Activated T-helper 1 cell treated with anti-CD3 and anti-CD28 coated beads, Interleukin-12 subunit alpha, Interleukin-12 subunit beta, Interleukin-2, Interleukin-4 antibody, amounts not matched to agents 30 ng/mL and 10 ng/mL and 1 ng/mL, durations not matched to agents 14 hours and 24 hours and 36 hours (primary cell): ENCODE measurements at regions of chr1 and their contacts with region 1.

Region 1: GRCh38 chr1:194295685-194296084 is 1109.3 kb upstream of the B3GALT2 start:
- DNase-seq: peak; percentile 12
- H3K4me3 Mint-ChIP-seq: no peak overlapping the region
- H3K27ac Mint-ChIP-seq: no peak overlapping the region
- H3K4me1 Mint-ChIP-seq: peaks cover 18% of the 10 kb centered on the region
- H3K27me3 Mint-ChIP-seq: no peaks in the 10 kb centered on the region

Region 2: DNA sequence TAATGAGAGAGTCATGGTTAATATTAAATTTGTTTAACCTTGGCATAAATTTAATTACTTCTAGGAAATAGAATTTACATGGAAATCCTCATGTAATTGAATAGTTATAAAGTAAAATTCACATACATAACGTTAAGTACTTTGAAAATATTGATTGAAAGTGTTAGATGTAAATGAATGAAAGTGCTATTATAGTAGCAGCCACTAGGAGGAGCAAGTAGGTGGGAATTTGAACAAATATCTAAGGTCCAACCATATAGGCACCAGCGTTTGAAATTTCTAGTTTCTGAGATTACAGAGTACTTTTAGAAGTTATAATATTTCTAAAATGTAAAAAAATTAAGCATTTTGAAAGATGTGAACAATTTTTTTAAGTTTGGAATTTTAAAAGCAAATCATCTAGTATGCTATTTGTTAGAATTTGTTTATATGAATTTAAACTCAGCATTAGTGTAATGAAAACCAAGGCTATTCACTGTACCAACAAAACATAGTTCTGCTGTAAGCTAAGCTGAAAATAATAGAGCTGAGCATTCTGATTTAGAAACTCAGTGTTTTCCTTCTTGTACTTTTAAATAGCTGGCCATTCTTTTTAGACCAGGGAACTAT is 1112.6 kb before region 1 on chr1:
- intact Hi-C with region 1: loop called (anchors 1 kb)
- DNase-seq: no peak
- H3K4me3 Mint-ChIP-seq: no peak overlapping the region
- H3K27ac Mint-ChIP-seq: no peak overlapping the region
- H3K4me1 Mint-ChIP-seq: peaks cover 35% of the 10 kb centered on the region
- H3K27me3 Mint-ChIP-seq: no peaks in the 10 kb centered on the region

Region 3: GRCh38 chr1:193256019-193256418 is 1039.7 kb before region 1 on chr1:
- intact Hi-C with region 1: loop called (anchors 10 kb)
- DNase-seq: no peak
- H3K4me3 Mint-ChIP-seq: no peak overlapping the region
- H3K27ac Mint-ChIP-seq: no peak overlapping the region
- H3K4me1 Mint-ChIP-seq: peaks cover 5% of the 10 kb centered on the region
- H3K27me3 Mint-ChIP-seq: no peaks in the 10 kb centered on the region

Region 4: GRCh38 chr1:193471981-193472380 is 823.7 kb before region 1 on chr1:
- intact Hi-C with region 1: no loop called
- DNase-seq: no peak
- H3K4me3 Mint-ChIP-seq: no peak overlapping the region
- H3K27ac Mint-ChIP-seq: no peak overlapping the region
- H3K4me1 Mint-ChIP-seq: peaks cover 42% of the 10 kb centered on the region
- H3K27me3 Mint-ChIP-seq: no peaks in the 10 kb centered on the region

Region 5: DNA sequence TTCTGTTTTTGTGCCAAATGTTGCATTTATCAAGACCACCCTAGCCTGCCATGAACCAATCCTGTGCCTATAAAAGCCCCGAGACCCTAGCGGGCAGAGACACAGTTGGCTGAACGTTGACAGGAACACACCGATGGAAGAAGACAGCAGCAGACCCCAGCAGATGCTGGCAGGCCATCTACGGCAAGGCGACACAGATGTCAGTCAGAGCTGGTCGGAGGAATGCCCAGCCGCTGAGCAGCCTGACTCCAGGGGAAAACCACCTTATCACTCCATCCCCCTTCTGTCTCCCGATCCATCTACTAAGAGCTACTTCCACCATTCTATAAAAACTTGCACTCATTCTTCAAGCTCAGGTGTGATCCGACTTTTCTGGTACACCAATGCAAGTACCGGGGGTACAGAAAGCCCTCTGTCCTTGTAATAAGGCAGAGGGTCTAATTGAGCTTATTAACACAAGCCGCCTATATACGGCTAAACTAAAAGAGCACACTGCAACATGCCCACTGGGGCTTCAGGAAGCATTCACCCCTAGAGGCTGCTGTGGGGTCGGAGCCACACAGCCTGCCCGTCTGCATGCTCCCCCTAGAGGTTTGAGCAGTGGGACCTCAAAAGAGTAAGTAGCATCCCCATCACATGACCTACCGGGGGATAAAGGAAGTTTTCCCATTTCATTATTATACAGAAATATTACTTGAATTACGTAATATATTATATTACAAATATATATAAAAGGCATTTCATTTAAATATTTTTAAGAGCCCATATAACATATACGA is 47.0 kb after region 1 on chr1:
- intact Hi-C with region 1: no loop called
- DNase-seq: no peak
- H3K4me3 Mint-ChIP-seq: no peak overlapping the region
- H3K27ac Mint-ChIP-seq: no peak overlapping the region
- H3K4me1 Mint-ChIP-seq: peaks cover 8% of the 10 kb centered on the region
- H3K27me3 Mint-ChIP-seq: no peaks in the 10 kb centered on the region

Region 6: DNA sequence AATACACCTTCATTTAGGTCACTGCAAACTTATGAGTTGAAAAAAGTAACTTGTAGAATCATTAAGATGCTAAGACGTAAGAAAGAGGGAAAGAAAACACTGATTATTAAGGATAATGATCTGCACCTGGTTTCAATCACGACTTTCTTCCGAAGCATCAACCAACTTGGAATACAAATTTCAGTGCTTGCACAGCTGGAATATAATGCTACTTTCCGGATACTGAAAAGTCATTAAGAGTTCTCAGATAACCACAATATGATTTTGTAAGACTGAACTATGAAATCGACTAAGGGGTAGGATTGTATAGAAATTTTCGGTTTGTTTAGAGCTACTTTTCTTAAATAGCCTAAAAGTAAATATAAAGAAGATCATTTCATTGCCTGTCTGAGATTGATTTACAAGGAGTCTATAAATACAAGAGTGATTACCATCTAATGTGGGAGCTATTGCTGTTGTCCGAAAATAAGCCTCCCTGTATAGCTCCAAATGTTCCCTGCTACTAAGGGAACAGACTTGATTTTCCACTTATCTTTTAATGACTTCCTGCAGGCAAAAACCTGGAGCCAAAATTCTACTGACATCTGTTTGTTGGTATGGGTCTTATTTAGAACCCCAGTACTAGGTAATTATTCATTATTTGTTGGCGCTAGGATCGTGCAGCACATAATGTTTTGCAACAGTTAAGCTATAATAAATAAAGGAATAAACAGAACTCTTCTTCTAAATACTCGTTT is 1639.3 kb after region 1 on chr1:
- intact Hi-C with region 1: no loop called
- DNase-seq: no peak
- H3K4me3 Mint-ChIP-seq: no peak overlapping the region
- H3K27ac Mint-ChIP-seq: no peak overlapping the region
- H3K4me1 Mint-ChIP-seq: no peaks in the 10 kb centered on the region
- H3K27me3 Mint-ChIP-seq: no peaks in the 10 kb centered on the region